Left cardiac atrium (tissue), 4 donors: ENCODE measurements at regions of chr1 and their contacts with region 1.

Region 1: GRCh38 chr1:198959032-198959431 is 320.2 kb downstream of the PTPRC start:
- DNase-seq: no peak
- ATAC-seq: no peak

Region 2: GRCh38 chr1:198977909-198978308 is 18.9 kb after region 1 on chr1:
- intact Hi-C with region 1: loop called in 1 of 2 experiments (anchors 1 kb)
- DNase-seq: no peak
- ATAC-seq: no peak